ENCODE measurements at regions of chr19 and their contacts with region 1.

Region 1: GRCh38 chr19:3544742-3545668 is 6.0 kb downstream of the TEKTIP1 start:
- DNase-seq: peak; percentile 73 to 98 (median 89)

Region 2: GRCh38 chr19:3618144-3618810 is 73.3 kb after region 1 on chr19:
- intact Hi-C with region 1: loop called (anchors 1 kb)
- DNase-seq: peak in 7 of 10 donors; percentile 48 to 94 (median 69)